Naive thymus-derived CD4-positive, alpha-beta T cell (primary cell): ENCODE measurements at regions of chr17 and their contacts with region 1.

Region 1: GRCh38 chr17:31842183-31843069 is 16.6 kb downstream of the COPRS start:
- DNase-seq: peak; percentile 29 to 70 (median 59)
- ATAC-seq: peak; percentile 93
- H3K4me3 ChIP-seq: no peak overlapping the region
- H3K4me3 Mint-ChIP-seq: no peak overlapping the region
- H3K27ac ChIP-seq: no peak overlapping the region
- H3K27ac Mint-ChIP-seq: no peak overlapping the region
- H3K4me1 ChIP-seq: no peaks in the 10 kb centered on the region
- H3K4me1 Mint-ChIP-seq: no peaks in the 10 kb centered on the region
- H3K27me3 ChIP-seq: no peaks in the 10 kb centered on the region
- H3K27me3 Mint-ChIP-seq: peaks cover 0 to 19% (median 11%) of the 10 kb centered on the region in 5 donors

Region 2: DNA sequence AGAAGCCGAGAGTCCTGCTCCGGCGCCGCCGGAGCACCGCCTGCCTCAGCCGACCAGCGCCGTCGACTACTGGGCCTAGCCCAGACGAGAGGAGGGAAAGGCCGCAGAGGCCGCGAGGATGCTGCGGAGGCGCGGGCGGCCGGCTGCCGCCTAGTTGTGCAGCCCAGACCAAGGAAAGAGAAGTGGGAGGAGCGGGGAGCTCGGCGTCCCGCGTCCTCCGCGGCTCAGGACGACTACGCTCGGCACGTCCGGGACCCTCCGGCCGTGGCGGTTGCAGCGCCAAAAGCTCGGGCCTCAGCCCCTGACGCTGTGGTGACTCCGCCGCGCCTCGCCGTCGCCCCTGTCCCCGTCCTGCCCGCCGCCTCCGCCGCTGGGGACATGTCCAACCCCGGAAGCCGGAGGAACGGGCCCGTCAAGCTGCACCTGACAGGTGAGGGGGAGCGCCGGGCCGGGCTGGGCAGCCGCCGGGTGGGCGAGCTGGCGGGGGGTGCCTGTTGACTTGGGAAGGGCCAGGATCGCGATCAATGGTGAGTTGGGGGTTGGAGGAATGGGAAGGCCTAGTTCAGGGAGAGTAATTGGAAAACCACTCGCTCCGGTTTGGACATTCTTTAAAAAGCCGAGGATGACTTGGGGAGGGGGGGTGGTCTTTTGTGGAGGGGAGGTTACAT is 833.9 kb before region 1 on chr17:
- CTCF ChIA-PET with region 1: no interaction called
- POLR2A ChIA-PET with region 1: no interaction called
- intact Hi-C with region 1: loop called in 1 of 2 experiments (anchors 1 kb)
- DNase-seq: peak; percentile 16 to 60 (median 40)
- ATAC-seq: peak; percentile 77
- H3K4me3 ChIP-seq: peak overlapping the region; percentile 75
- H3K4me3 Mint-ChIP-seq: peak overlapping the region; percentile 86 to 97 (median 92)
- H3K27ac ChIP-seq: peak overlapping the region; percentile 61
- H3K27ac Mint-ChIP-seq: peak overlapping the region; percentile 21 to 94 (median 88)
- H3K4me1 ChIP-seq: peaks cover 0 to 9% of the 10 kb centered on the region in 2 donors
- H3K4me1 Mint-ChIP-seq: peaks cover 8 to 23% (median 18%) of the 10 kb centered on the region in 7 donors
- H3K27me3 ChIP-seq: no peaks in the 10 kb centered on the region
- H3K27me3 Mint-ChIP-seq: peaks cover 0 to 31% (median 0%) of the 10 kb centered on the region in 5 donors

Region 3: GRCh38 chr17:31373150-31374093 is 469.0 kb before region 1 on chr17:
- CTCF ChIA-PET with region 1: interaction called, 4 read pairs
- POLR2A ChIA-PET with region 1: no interaction called
- intact Hi-C with region 1: loop called in 1 of 2 experiments (anchors 5 kb)
- DNase-seq: peak in 7 of 9 donors; percentile 51 to 73 (median 65)
- ATAC-seq: peak; percentile 90
- H3K4me3 ChIP-seq: no peak overlapping the region
- H3K4me3 Mint-ChIP-seq: no peak overlapping the region
- H3K27ac ChIP-seq: no peak overlapping the region
- H3K27ac Mint-ChIP-seq: peak overlapping the region in 3 of 9 donors; percentile 10 to 28 (median 26)
- H3K4me1 ChIP-seq: peaks cover 0 to 4% of the 10 kb centered on the region in 2 donors
- H3K4me1 Mint-ChIP-seq: peaks cover 17 to 30% (median 27%) of the 10 kb centered on the region in 7 donors
- H3K27me3 ChIP-seq: no peaks in the 10 kb centered on the region
- H3K27me3 Mint-ChIP-seq: no peaks in the 10 kb centered on the region

Region 4: GRCh38 chr17:31437720-31438420 is 404.6 kb before region 1 on chr17:
- CTCF ChIA-PET with region 1: interaction called, 5 read pairs
- POLR2A ChIA-PET with region 1: no interaction called
- intact Hi-C with region 1: loop called (anchors 1 kb)
- DNase-seq: no peak
- ATAC-seq: no peak
- H3K4me3 ChIP-seq: no peak overlapping the region
- H3K4me3 Mint-ChIP-seq: no peak overlapping the region
- H3K27ac ChIP-seq: no peak overlapping the region
- H3K27ac Mint-ChIP-seq: no peak overlapping the region
- H3K4me1 ChIP-seq: peaks cover 8% of the 10 kb centered on the region in 2 donors
- H3K4me1 Mint-ChIP-seq: peaks cover 0 to 17% (median 15%) of the 10 kb centered on the region in 7 donors
- H3K27me3 ChIP-seq: no peaks in the 10 kb centered on the region
- H3K27me3 Mint-ChIP-seq: peaks cover 0 to 13% (median 0%) of the 10 kb centered on the region in 5 donors

Region 5: GRCh38 chr17:31533546-31534155 is 308.8 kb before region 1 on chr17:
- CTCF ChIA-PET with region 1: interaction called, 9 read pairs
- POLR2A ChIA-PET with region 1: no interaction called
- intact Hi-C with region 1: loop called (anchors 1 to 5 kb)
- DNase-seq: peak in 1 of 9 donors; percentile 55
- ATAC-seq: no peak
- H3K4me3 ChIP-seq: no peak overlapping the region
- H3K4me3 Mint-ChIP-seq: no peak overlapping the region
- H3K27ac ChIP-seq: no peak overlapping the region
- H3K27ac Mint-ChIP-seq: peak overlapping the region in 5 of 9 donors; percentile 35 to 83 (median 44)
- H3K4me1 ChIP-seq: peaks cover 0 to 6% of the 10 kb centered on the region in 2 donors
- H3K4me1 Mint-ChIP-seq: peaks cover 10 to 35% (median 22%) of the 10 kb centered on the region in 7 donors
- H3K27me3 ChIP-seq: no peaks in the 10 kb centered on the region
- H3K27me3 Mint-ChIP-seq: no peaks in the 10 kb centered on the region

Region 6: GRCh38 chr17:31789707-31790505 is 52.5 kb before region 1 on chr17:
- CTCF ChIA-PET with region 1: no interaction called
- POLR2A ChIA-PET with region 1: no interaction called
- intact Hi-C with region 1: no loop called
- DNase-seq: no peak
- ATAC-seq: no peak
- H3K4me3 ChIP-seq: no peak overlapping the region
- H3K4me3 Mint-ChIP-seq: no peak overlapping the region
- H3K27ac ChIP-seq: no peak overlapping the region
- H3K27ac Mint-ChIP-seq: no peak overlapping the region
- H3K4me1 ChIP-seq: no peaks in the 10 kb centered on the region
- H3K4me1 Mint-ChIP-seq: peaks cover 0 to 5% (median 0%) of the 10 kb centered on the region in 7 donors
- H3K27me3 ChIP-seq: no peaks in the 10 kb centered on the region
- H3K27me3 Mint-ChIP-seq: peaks cover 3 to 14% (median 7%) of the 10 kb centered on the region in 5 donors

Region 7: DNA sequence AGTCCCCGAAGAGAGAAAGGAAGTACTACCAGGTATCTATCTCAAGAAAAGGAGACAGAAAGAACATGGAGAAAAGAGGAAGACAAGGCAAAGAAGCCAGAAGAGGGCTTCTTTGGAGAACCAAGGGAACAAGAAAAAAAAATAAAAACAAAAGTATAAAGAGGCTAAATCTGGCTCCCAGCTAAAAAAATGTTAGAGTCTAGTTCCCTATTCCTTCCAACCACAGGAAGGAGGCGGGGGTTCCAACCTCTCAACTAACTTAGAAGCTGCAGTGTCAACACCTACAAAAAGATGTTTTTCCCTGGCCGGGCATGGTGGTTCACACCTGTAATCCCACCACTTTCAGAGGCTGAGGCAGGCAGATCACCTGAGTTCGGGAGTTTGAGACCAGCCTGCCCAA is 45.7 kb after region 1 on chr17:
- CTCF ChIA-PET with region 1: no interaction called
- POLR2A ChIA-PET with region 1: no interaction called
- intact Hi-C with region 1: no loop called
- DNase-seq: no peak
- ATAC-seq: peak; percentile 44
- H3K4me3 ChIP-seq: no peak overlapping the region
- H3K4me3 Mint-ChIP-seq: no peak overlapping the region
- H3K27ac ChIP-seq: no peak overlapping the region
- H3K27ac Mint-ChIP-seq: peak overlapping the region in 2 of 9 donors; percentile 10 to 38
- H3K4me1 ChIP-seq: no peaks in the 10 kb centered on the region
- H3K4me1 Mint-ChIP-seq: peaks cover 0 to 5% (median 0%) of the 10 kb centered on the region in 7 donors
- H3K27me3 ChIP-seq: no peaks in the 10 kb centered on the region
- H3K27me3 Mint-ChIP-seq: no peaks in the 10 kb centered on the region